ENCODE measurements at regions of chr11 and their contacts with region 1.

Region 1: DNA sequence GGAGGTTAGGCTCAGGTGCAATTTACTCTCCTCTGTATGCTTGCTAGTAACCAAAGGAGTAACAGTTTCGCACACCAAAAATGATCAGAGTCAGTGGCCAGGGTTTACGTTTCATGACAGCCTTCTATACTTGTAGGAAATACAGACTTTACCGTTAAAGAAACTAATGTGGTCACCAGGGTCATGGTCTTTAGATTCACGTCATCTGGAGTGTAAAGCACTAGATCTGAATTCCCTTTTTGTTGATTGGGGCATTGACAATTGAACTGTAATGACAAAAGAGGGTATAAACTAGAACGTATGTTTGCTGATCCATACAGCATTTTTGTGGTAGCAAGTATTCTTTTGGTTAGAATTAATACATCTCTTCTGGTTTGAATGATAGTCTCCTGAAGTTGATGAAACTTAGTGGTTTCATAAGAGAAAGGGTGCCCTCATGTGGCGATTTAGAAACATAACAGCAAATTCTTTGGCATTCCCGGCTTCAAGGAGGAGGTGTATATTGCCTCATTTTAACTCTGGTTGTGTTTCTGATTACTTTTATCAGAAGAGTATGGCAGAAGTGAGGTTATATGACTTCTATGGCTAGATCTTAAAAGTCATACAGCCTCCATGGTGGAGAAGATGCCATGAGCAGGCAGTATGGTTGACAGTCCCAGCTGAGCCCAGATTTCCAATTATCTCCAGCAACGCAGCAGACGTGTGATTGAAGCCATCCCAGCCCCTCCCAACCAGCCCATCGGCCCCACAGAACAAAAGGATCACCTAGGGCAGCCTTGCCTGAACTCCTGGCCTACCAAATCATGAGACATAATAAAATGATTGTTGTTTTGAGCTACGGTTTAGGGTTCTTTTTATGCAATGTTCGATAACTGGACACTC is 35.1 kb downstream of the MMP7 start:
- DNase-seq: peak; percentile 53
- H3K4me3 Mint-ChIP-seq: no peak overlapping the region
- H3K27ac Mint-ChIP-seq: no peak overlapping the region
- H3K4me1 Mint-ChIP-seq: peaks cover 25% of the 10 kb centered on the region
- H3K27me3 Mint-ChIP-seq: no peaks in the 10 kb centered on the region

Region 2: DNA sequence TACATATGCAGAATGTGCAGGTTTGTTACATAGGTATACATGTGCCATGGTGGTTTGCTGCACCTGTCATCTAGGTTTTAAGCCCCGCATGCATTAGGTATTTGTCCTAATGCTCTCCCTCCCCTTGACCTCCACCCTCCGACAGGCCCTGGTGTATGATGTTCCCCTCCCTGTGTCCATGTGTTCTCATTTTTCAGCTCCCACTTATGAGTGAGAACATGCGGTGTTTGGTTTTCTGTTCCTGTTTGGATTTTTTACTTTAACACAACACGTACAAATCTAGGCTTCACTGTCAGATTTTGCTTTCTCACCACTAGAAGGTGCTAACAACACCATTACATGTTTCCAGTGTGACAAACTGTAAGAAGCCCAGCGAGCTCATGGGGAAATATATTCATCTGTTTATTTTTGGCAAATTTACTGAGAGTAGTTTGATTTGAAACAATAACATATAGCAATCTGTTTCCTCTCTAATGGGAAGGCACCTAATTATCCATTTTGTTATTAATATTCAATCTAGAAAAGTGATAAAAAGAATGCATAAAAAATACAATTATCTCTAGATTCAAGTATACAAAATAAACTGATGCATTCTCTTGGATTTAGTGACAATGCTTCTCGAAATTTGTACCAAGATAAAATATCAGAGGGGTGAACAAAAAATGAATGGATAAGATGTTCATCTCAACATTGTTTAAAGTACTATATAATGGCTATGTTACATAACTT is 201.4 kb before region 1 on chr11:
- CTCF ChIA-PET with region 1: interaction called, 18 read pairs
- intact Hi-C with region 1: loop called (anchors 1 kb)
- DNase-seq: peak; percentile 35
- H3K4me3 Mint-ChIP-seq: peak overlapping the region; percentile 74
- H3K27ac Mint-ChIP-seq: peak overlapping the region; percentile 85
- H3K4me1 Mint-ChIP-seq: peaks cover 21% of the 10 kb centered on the region
- H3K27me3 Mint-ChIP-seq: no peaks in the 10 kb centered on the region

Region 3: GRCh38 chr11:102341844-102342318 is 153.5 kb before region 1 on chr11:
- CTCF ChIA-PET with region 1: interaction called, 50 read pairs
- intact Hi-C with region 1: loop called (anchors 1 kb)
- DNase-seq: peak; percentile 90
- H3K4me3 Mint-ChIP-seq: no peak overlapping the region
- H3K27ac Mint-ChIP-seq: no peak overlapping the region
- H3K4me1 Mint-ChIP-seq: peaks cover 46% of the 10 kb centered on the region
- H3K27me3 Mint-ChIP-seq: no peaks in the 10 kb centered on the region

Region 4: DNA sequence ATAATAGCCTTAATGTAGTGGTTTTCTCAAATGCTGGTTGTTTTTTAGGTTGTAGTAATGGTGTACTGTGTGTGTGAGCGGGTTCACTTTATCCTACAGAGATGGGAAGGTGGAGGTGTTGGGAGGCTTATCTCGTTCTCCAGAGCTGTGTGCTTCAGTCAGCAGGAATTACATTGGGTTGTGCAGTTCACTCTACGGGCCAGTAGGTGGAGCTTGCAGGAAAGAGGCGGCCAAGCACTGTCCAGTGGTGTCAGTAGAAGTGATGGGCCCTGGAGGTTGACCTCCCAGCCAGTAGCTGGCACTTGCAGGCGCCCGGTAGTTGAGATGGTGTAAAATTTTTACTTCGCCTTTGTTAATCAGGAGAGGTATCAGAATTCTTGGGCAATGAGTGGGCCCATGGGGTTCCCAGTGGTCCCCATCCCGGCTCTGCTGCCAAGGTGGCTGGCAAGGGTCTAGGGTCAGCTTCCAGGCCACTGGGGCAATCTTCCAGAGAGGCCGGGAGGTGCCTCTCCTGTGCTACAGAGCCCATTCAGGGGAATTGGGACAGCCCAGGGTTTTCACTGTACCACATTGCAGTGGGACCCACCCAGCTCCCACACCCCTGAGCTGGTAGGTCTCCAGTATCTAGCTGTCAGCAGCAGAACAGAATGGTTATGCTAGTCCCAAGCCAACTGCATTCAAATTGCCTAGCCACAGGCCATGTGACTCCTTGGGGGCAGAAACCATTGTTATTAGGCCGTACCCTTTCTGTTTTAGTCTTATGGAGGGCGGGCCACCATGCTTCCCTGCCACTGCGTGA is 104.5 kb before region 1 on chr11:
- CTCF ChIA-PET with region 1: interaction called, 34 read pairs
- intact Hi-C with region 1: loop called (anchors 1 kb)
- DNase-seq: peak; percentile 72
- H3K4me3 Mint-ChIP-seq: no peak overlapping the region
- H3K27ac Mint-ChIP-seq: peak overlapping the region; percentile 29
- H3K4me1 Mint-ChIP-seq: peaks cover 40% of the 10 kb centered on the region
- H3K27me3 Mint-ChIP-seq: no peaks in the 10 kb centered on the region

Region 5: DNA sequence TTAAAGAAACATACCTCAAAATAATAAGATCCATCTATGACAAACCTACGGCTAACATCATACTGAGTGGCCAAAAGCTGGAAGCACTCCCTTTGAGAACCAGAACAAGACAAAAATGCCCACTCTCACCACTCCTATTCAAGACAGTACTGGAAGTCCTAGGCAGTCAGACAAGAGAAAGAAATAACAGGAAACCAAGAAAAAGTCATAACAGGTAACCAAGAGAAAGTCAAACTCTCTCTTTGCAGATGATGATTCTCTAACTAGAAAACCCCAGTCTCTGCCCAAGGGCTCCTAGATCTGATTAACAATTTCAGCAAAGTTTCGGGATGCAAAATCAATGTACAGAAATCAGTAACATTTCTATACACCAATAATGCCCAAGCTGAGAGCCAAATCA is 78.4 kb before region 1 on chr11:
- CTCF ChIA-PET with region 1: interaction called, 4 read pairs
- intact Hi-C with region 1: loop called (anchors 1 kb)
- DNase-seq: peak; percentile 38
- H3K4me3 Mint-ChIP-seq: peak overlapping the region; percentile 34
- H3K27ac Mint-ChIP-seq: peak overlapping the region; percentile 84
- H3K4me1 Mint-ChIP-seq: peaks cover 92% of the 10 kb centered on the region
- H3K27me3 Mint-ChIP-seq: no peaks in the 10 kb centered on the region

Region 6: DNA sequence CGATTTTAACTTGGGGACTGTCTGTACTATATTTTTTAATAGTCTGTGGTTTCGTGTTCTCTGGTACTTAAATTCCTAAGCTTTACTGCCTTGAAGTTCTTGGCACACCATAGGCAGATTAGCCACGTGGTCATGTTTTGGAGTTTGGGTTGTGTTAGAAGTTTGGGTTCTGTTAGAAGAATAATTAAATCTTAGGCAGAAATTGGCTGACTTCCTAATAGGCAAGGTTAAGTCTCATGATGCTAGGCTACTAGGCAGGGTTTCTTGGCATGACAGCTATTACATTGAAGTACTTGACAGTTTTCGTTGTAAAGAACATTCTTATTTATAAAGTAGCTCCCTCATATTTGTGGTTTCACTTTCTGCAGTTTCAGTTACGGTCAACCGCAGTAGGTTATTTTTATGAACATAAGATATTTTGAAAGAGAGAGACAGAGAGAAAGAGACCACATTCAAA is 65.2 kb after region 1 on chr11:
- CTCF ChIA-PET with region 1: interaction called, 3 read pairs
- intact Hi-C with region 1: loop called (anchors 2 kb)
- DNase-seq: no peak
- H3K4me3 Mint-ChIP-seq: peak overlapping the region; percentile 35
- H3K27ac Mint-ChIP-seq: peak overlapping the region; percentile 39
- H3K4me1 Mint-ChIP-seq: peaks cover 41% of the 10 kb centered on the region
- H3K27me3 Mint-ChIP-seq: no peaks in the 10 kb centered on the region

Region 7: GRCh38 chr11:102603091-102603490 is 107.7 kb after region 1 on chr11:
- CTCF ChIA-PET with region 1: no interaction called
- intact Hi-C with region 1: no loop called
- DNase-seq: no peak
- H3K4me3 Mint-ChIP-seq: no peak overlapping the region
- H3K27ac Mint-ChIP-seq: no peak overlapping the region
- H3K4me1 Mint-ChIP-seq: peaks cover 27% of the 10 kb centered on the region
- H3K27me3 Mint-ChIP-seq: no peaks in the 10 kb centered on the region

Region 8: DNA sequence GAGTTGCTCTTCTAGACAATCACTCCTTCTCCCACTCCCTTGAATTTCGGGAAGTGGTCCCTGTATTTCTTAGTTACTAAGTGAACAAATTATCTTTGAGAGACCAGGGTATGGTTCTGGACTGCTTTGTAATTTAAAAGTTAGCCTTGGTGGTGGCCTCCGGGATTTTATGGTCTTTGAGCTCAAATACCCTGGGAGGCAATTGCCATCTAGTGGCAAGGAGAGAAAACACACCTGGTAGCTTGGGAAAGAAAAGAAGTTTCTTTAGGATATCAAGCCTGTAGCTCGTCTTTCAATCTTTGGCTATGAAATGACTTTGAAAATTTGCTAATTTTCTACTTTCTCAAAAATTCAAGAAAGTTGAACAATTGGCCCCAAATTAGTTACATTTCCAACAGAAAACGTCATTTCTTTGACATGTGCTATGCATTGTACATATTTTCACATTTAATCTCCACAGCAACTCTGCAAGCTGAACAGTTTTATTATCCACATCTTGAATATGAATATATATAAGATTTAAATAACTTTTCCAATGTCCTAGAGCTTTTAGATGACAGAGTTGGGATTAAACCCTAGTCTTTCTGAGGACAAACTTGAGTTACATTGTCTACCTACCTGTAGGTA is 171.0 kb after region 1 on chr11:
- CTCF ChIA-PET with region 1: interaction called, 10 read pairs
- intact Hi-C with region 1: loop called (anchors 1 kb)
- DNase-seq: peak; percentile 28
- H3K4me3 Mint-ChIP-seq: no peak overlapping the region
- H3K27ac Mint-ChIP-seq: no peak overlapping the region
- H3K4me1 Mint-ChIP-seq: no peaks in the 10 kb centered on the region
- H3K27me3 Mint-ChIP-seq: no peaks in the 10 kb centered on the region

Measured in activated naive CD4-positive, alpha-beta T cell treated with anti-CD3 and anti-CD28 coated beads for 36 hours (primary cell).